ENCODE measurements at regions of chr20 and their contacts with region 1.

Region 1: DNA sequence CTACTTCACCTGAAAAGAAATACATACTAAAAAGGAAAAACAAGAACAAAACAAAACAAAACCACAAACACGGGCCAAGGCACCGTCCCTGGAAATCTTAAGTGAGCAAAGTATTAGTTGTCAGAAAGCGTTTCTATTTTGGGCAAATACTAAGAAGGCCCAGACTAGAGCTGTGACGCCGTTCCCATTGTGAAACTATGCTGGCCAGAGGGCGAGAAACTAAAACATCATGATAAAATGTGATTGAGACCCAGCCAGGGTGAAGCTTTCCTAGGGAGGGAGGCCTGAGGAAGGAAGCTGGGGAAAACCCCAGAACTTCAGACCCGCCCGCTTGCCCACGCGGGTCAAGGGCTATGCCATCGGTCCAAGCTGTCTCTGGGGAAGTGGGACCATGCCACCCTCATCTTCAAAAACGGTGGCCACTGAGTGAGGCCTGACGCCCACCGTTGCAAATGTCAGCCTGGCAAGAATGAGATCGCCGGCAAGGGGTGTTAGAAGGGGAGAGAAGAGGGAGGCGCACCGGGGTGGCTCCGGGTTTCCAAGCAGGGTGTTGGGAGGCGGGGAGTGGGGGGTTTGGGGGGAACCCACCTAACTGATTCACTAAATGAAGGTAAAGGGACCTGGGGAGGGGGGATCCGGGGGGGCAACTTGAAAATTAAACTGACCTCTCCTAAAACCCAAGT is 1950.9 kb upstream of the DEFB115 start:
- DNase-seq: no peak
- H3K4me3 Mint-ChIP-seq: peak overlapping the region; percentile 71
- H3K27ac Mint-ChIP-seq: peak overlapping the region; percentile 90
- H3K4me1 Mint-ChIP-seq: peaks cover 31% of the 10 kb centered on the region
- H3K27me3 Mint-ChIP-seq: no peaks in the 10 kb centered on the region

Region 2: GRCh38 chr20:30168025-30168799 is 861.7 kb after region 1 on chr20:
- intact Hi-C with region 1: loop called (anchors 5 kb)
- DNase-seq: peak; percentile 24
- H3K4me3 Mint-ChIP-seq: peak overlapping the region; percentile 15
- H3K27ac Mint-ChIP-seq: no peak overlapping the region
- H3K4me1 Mint-ChIP-seq: peaks cover 21% of the 10 kb centered on the region
- H3K27me3 Mint-ChIP-seq: no peaks in the 10 kb centered on the region

Region 3: DNA sequence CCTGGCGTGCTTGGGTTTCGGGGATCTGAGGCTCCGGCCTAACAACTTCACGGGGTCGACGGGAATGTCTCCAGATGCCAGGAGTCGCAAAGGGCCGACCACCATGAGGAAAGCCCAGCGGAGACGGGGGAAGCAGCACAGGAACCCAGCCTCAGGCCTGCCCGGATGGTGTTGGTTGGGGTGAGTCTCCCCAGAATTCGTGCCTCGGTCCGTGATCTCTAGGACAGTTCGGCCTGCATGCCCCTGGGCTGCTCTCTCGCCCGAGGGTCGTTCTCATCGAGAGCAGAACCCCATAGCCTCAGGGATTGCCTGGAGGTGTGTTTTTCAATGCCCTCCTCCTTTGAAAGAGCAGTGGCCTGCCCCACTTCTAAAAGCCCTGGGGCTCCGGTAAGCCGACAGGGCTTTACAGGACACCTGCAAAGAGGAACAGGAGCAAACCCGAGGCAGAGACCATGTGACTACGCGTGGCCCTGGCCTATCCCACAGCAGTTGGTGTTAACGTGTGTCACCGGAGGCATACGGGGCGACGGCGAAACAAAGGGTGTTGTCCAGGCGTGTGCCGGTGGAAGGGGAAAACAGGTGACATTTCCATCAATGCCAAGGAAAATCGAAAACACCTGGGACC is 977.9 kb after region 1 on chr20:
- intact Hi-C with region 1: loop called (anchors 5 kb)
- DNase-seq: no peak
- H3K4me3 Mint-ChIP-seq: peak overlapping the region; percentile 83
- H3K27ac Mint-ChIP-seq: no peak overlapping the region
- H3K4me1 Mint-ChIP-seq: peaks cover 32% of the 10 kb centered on the region
- H3K27me3 Mint-ChIP-seq: no peaks in the 10 kb centered on the region

Measured in activated T-helper 2 cell treated with anti-CD3 and anti-CD28 coated beads, Interferon-gamma antibody, Interleukin-2, Interleukin-4, amounts not matched to agents 10 μg/mL and 5 μg/mL and 100 μg/mL, durations not matched to agents 14 hours and 24 hours and 36 hours (primary cell).